ENCODE measurements at regions of chr1 and their contacts with region 1.

Region 1: GRCh38 chr1:202144402-202145067 is at the start of gene ARL8A:
- DNase-seq: peak; percentile 93
- H3K4me3 ChIP-seq: peak within 1 kb of the TSS; percentile 87 to 93
- H3K27ac ChIP-seq: peak within 1 kb of the TSS; percentile 30 to 74; a peak in 2 of 4 replicates
- H3K4me1 ChIP-seq: peaks cover 8 to 16% of the 10 kb centered on the region in 2 experiments; a peak in 2 of 4 replicates
- H3K27me3 ChIP-seq: no peaks in the 10 kb centered on the region
- CTCF ChIP-seq: no peak
- EP300 ChIP-seq: no peak
- RAD21 ChIP-seq: no peak
- polyA plus RNA-seq, gene ARL8A: 62.0 and 66.9 TPM in 2 replicates

Region 2: GRCh38 chr1:201982623-201983379 is 161.7 kb before region 1 on chr1 and contains the start of gene RNPEP:
- CTCF ChIA-PET with region 1: no interaction called
- POLR2A ChIA-PET with region 1: no interaction called
- DNase-seq: peak; percentile 82
- H3K4me3 ChIP-seq: peak within 1 kb of the TSS; percentile 67 to 69
- H3K27ac ChIP-seq: peak within 1 kb of the TSS; percentile 66 to 78
- H3K4me1 ChIP-seq: peaks cover 0 to 8% of the 10 kb centered on the region in 2 experiments; a peak in 2 of 4 replicates
- H3K27me3 ChIP-seq: no peaks in the 10 kb centered on the region
- CTCF ChIP-seq: peak; percentile 22; the same call in 1 of the 2 replicates
- EP300 ChIP-seq: no peak
- RAD21 ChIP-seq: no peak
- polyA plus RNA-seq, gene RNPEP: 36.7 and 46.7 TPM in 2 replicates

Region 3: DNA sequence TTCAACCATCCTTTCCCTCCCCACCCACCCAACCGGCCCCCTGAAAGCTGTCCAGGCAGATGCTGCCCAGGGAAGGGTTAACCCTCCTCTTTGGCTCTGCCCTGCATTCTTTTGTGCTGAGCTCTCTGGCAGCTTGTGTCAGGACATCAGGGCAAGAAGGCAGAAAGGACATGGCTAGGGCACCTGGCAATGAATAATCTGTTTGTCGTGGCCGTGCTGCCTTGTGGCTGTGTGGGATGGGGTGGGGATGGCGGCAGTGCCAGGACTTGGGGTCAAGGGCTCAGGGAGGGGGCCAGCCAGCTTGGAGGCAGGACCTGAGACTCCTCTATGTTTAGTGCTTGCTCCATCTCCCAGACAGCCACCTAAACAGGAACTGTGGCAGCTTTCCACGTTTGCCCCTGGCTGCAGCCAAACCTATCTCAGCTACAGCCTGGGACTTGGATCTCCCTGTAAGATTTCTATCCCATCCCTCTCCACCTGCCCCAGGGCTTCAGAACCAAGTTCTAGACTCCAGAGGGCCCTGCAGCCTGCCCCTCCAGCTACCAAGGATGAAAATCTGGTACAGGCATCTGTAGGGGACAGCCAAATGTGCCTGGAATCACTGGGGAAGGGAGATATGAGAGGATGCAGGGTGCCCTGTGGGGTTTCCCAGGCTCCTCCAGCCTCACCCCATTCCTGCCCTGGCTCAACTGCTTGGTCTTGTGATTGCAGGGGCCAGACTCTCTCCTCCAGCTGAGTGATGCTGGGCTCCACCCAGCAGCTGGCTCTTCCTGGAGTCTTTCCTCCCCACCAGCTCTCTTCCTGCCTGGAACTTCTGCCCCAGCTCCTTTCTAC is 31.5 kb before region 1 on chr1:
- CTCF ChIA-PET with region 1: interaction called, 10 read pairs
- POLR2A ChIA-PET with region 1: no interaction called
- DNase-seq: no peak
- H3K4me3 ChIP-seq: no peak overlapping the region
- H3K27ac ChIP-seq: peak overlapping the region in 1 of 2 experiments; percentile 1; a peak in 1 of 4 replicates
- H3K4me1 ChIP-seq: peaks cover 6 to 12% of the 10 kb centered on the region in 2 experiments; a peak in 2 of 4 replicates
- H3K27me3 ChIP-seq: no peaks in the 10 kb centered on the region
- CTCF ChIP-seq: no peak
- EP300 ChIP-seq: no peak
- RAD21 ChIP-seq: no peak

Region 4: GRCh38 chr1:202122639-202123335 is 21.7 kb before region 1 on chr1 and contains the start of gene GPR37L1:
- CTCF ChIA-PET with region 1: interaction called, 11 read pairs
- POLR2A ChIA-PET with region 1: no interaction called
- DNase-seq: peak; percentile 91
- H3K4me3 ChIP-seq: no peak within 1 kb of the TSS
- H3K27ac ChIP-seq: no peak within 1 kb of the TSS
- H3K4me1 ChIP-seq: peaks cover 0 to 9% of the 10 kb centered on the region in 2 experiments; a peak in 1 of 4 replicates
- H3K27me3 ChIP-seq: no peaks in the 10 kb centered on the region
- CTCF ChIP-seq: peak; percentile 51
- EP300 ChIP-seq: no peak
- RAD21 ChIP-seq: peak; percentile 58
- polyA plus RNA-seq, gene GPR37L1: not detected in 2 replicates

Region 5: GRCh38 chr1:202154766-202155477 is 10.4 kb after region 1 on chr1:
- CTCF ChIA-PET with region 1: interaction called, 10 read pairs
- POLR2A ChIA-PET with region 1: no interaction called
- DNase-seq: peak; percentile 62
- H3K4me3 ChIP-seq: no peak overlapping the region
- H3K27ac ChIP-seq: peak overlapping the region in 1 of 2 experiments; percentile 77; a peak in 2 of 4 replicates
- H3K4me1 ChIP-seq: peaks cover 9 to 25% of the 10 kb centered on the region in 2 experiments; a peak in 1 of 4 replicates
- H3K27me3 ChIP-seq: no peaks in the 10 kb centered on the region
- CTCF ChIP-seq: peak; percentile 56
- EP300 ChIP-seq: no peak
- RAD21 ChIP-seq: peak; percentile 57